ENCODE measurements at regions of chr10 and their contacts with region 1.

Region 1: GRCh38 chr10:34933676-34934075 is 118.6 kb upstream of the PARD3 start:
- ATAC-seq: no peak
- H3K4me3 ChIP-seq: no peak overlapping the region
- H3K27ac ChIP-seq: no peak overlapping the region
- H3K4me1 ChIP-seq: peaks cover 0 to 3% of the 10 kb centered on the region in 2 donors

Region 2: DNA sequence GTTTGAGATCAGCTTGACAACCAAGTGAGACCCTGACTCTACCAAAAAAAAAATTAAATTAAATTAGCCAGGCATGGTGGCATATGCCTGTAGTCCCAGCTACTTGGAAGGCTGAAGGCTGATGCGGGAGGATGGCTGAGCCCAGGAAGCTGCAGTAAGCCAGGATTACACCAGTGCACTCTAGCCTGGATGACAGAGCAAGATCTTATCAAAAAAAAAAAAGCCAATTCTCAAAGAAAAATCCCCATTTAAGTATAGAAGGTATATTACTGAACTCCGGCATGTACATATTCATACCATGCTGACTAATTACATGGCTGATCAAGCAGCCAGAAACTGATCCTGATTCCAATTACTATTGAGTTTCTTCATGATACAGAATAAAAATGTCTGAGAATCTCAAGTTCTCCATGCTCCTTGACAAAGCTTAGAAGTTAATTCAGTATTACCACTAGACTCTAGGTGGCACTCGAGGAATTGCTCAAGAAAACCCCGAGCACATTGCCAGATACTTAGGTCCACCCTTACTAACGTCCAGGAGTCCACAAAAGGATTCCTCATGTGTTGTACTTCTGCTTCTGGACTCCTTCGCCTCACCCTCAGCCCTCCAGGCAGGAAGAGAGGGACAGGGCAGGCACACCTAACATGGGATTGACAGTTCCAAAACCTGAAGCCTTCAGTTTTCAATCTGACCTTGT is 267.5 kb before region 1 on chr10:
- in situ Hi-C with region 1: loop called in 1 of 9 experiments (anchors 25 kb)
- ATAC-seq: peak; percentile 74 to 99 (median 83)
- H3K4me3 ChIP-seq: no peak overlapping the region
- H3K27ac ChIP-seq: no peak overlapping the region
- H3K4me1 ChIP-seq: peaks cover 6 to 19% of the 10 kb centered on the region in 2 donors

Region 3: GRCh38 chr10:34710391-34710751 is 223.3 kb before region 1 on chr10:
- in situ Hi-C with region 1: no loop called
- ATAC-seq: peak in 6 of 8 experiments; percentile 18 to 90 (median 58)
- H3K4me3 ChIP-seq: no peak overlapping the region
- H3K27ac ChIP-seq: no peak overlapping the region
- H3K4me1 ChIP-seq: peaks cover 0 to 3% of the 10 kb centered on the region in 2 donors

Measured in motor neuron (in vitro differentiated cells).